ENCODE measurements at regions of chr9 and their contacts with region 1.

Region 1: DNA sequence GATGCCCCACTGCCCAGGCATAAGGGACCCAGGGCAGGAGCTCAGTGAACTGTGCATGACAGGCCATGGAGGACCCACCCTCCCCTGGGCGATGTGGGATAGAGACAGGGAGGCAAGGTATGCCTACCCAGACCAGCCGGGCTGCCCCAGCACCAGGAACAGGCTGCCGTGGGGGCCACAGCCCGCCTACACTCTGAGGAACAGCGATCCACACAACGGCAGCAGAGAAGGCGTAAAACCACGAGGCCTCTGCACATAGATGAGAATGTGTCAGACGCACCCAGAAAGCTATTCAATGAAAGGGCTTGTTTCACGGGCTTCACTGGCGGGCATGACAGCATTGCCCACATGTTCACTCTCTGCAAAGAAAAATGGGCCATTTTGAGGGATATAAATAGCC is 49.5 kb downstream of the SEMA4D start:
- DNase-seq: peak in 3 of 5 donors; percentile 45 to 74 (median 55)
- H3K4me3 ChIP-seq: peak overlapping the region; percentile 39
- H3K4me3 Mint-ChIP-seq: peak overlapping the region; percentile 6 to 80 (median 75)
- H3K27ac ChIP-seq: no peak overlapping the region
- H3K27ac Mint-ChIP-seq: peak overlapping the region; percentile 85 to 98 (median 94)
- H3K4me1 ChIP-seq: peaks cover 90% of the 10 kb centered on the region
- H3K4me1 Mint-ChIP-seq: peaks cover 87 to 96% (median 93%) of the 10 kb centered on the region in 3 donors
- H3K27me3 ChIP-seq: no peaks in the 10 kb centered on the region
- H3K27me3 Mint-ChIP-seq: peaks cover 0 to 2% of the 10 kb centered on the region in 2 donors

Region 2: GRCh38 chr9:89310475-89311346 is 137.7 kb before region 1 on chr9 and contains the start of gene CKS2:
- CTCF ChIA-PET with region 1: no interaction called
- POLR2A ChIA-PET with region 1: interaction called, 10 read pairs
- DNase-seq: peak; percentile 99 to 100 (median 100)
- H3K4me3 ChIP-seq: peak within 1 kb of the TSS; percentile 71
- H3K4me3 Mint-ChIP-seq: peak within 1 kb of the TSS; percentile 92 to 98 (median 96)
- H3K27ac ChIP-seq: peak within 1 kb of the TSS; percentile 99
- H3K27ac Mint-ChIP-seq: peak within 1 kb of the TSS; percentile 97 to 100 (median 98)
- H3K4me1 ChIP-seq: peaks cover 30% of the 10 kb centered on the region
- H3K4me1 Mint-ChIP-seq: peaks cover 26 to 49% (median 48%) of the 10 kb centered on the region in 3 donors
- H3K27me3 ChIP-seq: no peaks in the 10 kb centered on the region
- H3K27me3 Mint-ChIP-seq: peaks cover 6 to 8% of the 10 kb centered on the region in 2 donors
- total RNA-seq, gene CKS2: 252 to 253 TPM

Region 3: DNA sequence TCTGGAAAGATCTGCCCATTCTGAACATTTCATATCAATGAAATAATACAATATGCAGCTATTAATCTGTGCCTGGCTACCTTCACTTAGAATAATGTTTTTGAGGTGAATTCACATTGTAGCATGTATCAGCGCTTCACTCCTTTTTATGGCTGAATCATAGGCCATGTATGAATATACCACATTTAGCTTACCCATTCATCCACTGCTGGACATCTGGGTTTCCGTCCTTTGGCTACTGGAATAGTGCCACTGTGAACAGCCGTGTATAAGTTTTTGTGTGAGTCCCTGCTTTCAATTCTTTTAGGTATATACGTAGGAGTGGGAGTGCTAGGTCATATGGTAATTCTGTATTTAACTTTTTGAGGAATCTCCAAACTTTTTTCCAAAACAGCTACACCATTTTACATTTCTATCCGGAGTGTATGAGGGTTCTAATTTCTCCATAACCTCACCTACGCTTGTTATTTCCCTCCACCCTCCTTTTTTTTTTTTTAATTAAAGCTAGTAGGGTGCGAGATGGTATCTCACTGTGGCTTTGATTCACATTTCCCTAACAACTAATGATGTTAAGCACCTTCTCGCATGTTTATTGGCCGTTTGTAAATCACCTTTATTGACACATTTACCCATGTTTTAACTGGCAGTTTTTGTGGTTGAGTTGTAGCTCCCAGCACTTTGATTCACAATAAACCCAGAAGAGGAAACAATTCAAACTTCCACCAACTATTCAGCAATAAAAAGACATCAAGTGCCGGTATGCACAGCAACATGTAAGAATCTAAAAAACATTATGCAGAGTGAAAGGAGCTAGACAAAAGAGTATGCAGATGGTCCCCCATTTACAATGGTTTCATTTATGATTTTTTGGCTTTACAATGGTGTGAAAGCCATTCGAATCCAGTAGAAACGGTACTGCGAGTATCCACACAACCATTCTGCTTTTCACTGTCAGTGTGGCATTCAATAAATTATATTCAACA is 41.5 kb after region 1 on chr9:
- CTCF ChIA-PET with region 1: no interaction called
- POLR2A ChIA-PET with region 1: interaction called, 11 read pairs
- DNase-seq: peak in 2 of 5 donors; percentile 79 to 81
- H3K4me3 ChIP-seq: peak overlapping the region; percentile 9
- H3K4me3 Mint-ChIP-seq: peak overlapping the region; percentile 33 to 94 (median 66)
- H3K27ac ChIP-seq: no peak overlapping the region
- H3K27ac Mint-ChIP-seq: peak overlapping the region; percentile 16 to 96 (median 88)
- H3K4me1 ChIP-seq: peaks cover 93% of the 10 kb centered on the region
- H3K4me1 Mint-ChIP-seq: peaks cover 92 to 98% (median 98%) of the 10 kb centered on the region in 3 donors
- H3K27me3 ChIP-seq: no peaks in the 10 kb centered on the region
- H3K27me3 Mint-ChIP-seq: no peaks in the 10 kb centered on the region

Measured in CD8-positive, alpha-beta memory T cell (primary cell).